Activated B cell treated with CpG ODN at 0.5 μM for 24 hours (primary cell): ENCODE measurements at regions of chr2 and their contacts with region 1.

Region 1: DNA sequence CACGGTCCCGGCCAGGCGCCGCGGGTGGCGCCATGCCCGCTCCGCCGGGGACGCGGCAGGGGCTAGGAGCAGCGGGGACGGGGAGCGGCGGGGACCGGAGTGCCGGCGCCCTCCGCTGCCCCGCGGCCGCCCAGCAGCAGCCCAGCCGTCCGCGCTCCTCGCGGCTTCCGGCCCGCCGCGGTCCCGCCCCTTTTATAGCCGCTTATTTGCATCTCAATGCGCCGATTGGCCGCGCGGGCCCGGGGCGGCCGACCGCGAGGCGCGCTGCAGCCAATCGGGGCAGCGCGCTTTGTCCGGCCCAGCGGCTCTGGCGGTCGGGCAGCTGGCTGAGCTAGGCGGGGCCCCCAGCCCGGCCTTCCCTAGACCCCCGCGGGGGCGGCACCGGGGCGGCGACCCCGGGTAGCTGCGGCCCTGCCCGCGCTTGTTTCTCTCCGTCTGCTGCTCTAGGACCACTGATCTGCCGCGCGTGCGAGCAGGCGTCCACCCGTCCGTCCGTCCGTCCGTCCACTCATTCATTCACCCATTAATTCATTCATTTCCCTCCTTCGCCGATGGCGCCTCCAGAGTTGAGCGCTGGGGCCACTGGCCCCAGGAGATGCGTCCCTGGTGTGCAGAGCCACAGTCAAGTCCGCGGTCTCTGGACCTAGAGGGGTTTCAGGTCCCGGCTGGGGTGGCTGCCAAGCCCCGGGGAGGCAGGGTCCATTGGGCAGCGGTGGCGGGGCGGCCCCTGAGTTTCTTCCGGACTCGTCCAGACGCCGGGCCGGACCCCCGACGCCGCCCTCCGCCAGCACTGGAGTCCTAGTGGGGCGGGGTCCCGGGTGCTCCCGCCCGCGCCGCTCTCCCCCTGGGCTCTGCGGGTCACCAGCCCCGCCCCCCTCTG is at the start of gene HES6:
- DNase-seq: peak; percentile 77
- ATAC-seq: peak; percentile 86
- H3K4me3 Mint-ChIP-seq: peak within 1 kb of the TSS; percentile 86
- H3K27ac Mint-ChIP-seq: peak within 1 kb of the TSS; percentile 68
- H3K4me1 Mint-ChIP-seq: peaks cover 13% of the 10 kb centered on the region
- H3K27me3 Mint-ChIP-seq: peaks cover 12% of the 10 kb centered on the region
- CTCF ChIP-seq: no peak
- total RNA-seq, gene HES6: 4.4 and 5.0 TPM in 2 replicates

Region 2: GRCh38 chr2:238106686-238107524 is 133.2 kb before region 1 on chr2:
- CTCF ChIA-PET with region 1: no interaction called
- POLR2A ChIA-PET with region 1: no interaction called
- intact Hi-C with region 1: loop called (anchors 10 kb)
- DNase-seq: peak; percentile 15
- ATAC-seq: no peak
- H3K4me3 Mint-ChIP-seq: peak overlapping the region; percentile 88
- H3K27ac Mint-ChIP-seq: peak overlapping the region; percentile 86
- H3K4me1 Mint-ChIP-seq: peaks cover 35% of the 10 kb centered on the region
- H3K27me3 Mint-ChIP-seq: no peaks in the 10 kb centered on the region
- CTCF ChIP-seq: no peak

Region 3: GRCh38 chr2:238220892-238221521 is 19.1 kb before region 1 on chr2:
- CTCF ChIA-PET with region 1: no interaction called
- POLR2A ChIA-PET with region 1: no interaction called
- intact Hi-C with region 1: no loop called
- DNase-seq: no peak
- ATAC-seq: no peak
- H3K4me3 Mint-ChIP-seq: peak overlapping the region; percentile 35
- H3K27ac Mint-ChIP-seq: no peak overlapping the region
- H3K4me1 Mint-ChIP-seq: no peaks in the 10 kb centered on the region
- H3K27me3 Mint-ChIP-seq: peaks cover 8% of the 10 kb centered on the region
- CTCF ChIP-seq: no peak

Region 4: DNA sequence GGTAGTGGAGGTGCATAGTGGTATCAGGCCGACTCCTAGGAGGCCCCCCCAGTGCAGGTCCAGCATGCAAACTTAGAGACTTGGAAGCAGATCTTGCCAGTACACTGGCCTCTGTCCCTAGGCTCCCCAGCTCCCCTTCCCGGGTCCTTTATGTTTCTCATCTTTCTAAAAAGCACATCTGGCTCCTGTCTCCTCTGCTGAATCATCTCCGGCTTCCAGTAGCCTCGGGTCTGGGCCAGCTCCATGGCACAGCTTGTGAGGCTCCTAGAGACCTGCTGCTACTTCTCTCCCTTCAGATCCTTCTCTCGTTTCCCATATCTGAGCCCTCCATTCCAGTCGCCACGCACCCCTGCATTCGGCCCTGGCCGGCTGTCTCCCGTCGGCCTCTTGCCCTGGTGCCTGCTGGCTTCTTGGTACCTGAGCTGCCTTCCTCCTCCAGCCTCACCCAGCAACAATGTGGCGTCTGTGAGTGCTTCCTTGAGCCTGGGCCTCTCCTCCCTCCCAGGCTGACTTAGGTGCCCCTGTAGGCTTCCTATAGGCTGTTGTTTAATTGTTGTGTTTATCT is 86.8 kb after region 1 on chr2:
- CTCF ChIA-PET with region 1: no interaction called
- POLR2A ChIA-PET with region 1: no interaction called
- intact Hi-C with region 1: no loop called
- DNase-seq: no peak
- ATAC-seq: no peak
- H3K4me3 Mint-ChIP-seq: no peak overlapping the region
- H3K27ac Mint-ChIP-seq: no peak overlapping the region
- H3K4me1 Mint-ChIP-seq: no peaks in the 10 kb centered on the region
- H3K27me3 Mint-ChIP-seq: no peaks in the 10 kb centered on the region
- CTCF ChIP-seq: no peak

Region 5: GRCh38 chr2:239169311-239170048 is 929.4 kb after region 1 on chr2:
- CTCF ChIA-PET with region 1: no interaction called
- POLR2A ChIA-PET with region 1: no interaction called
- intact Hi-C with region 1: no loop called
- DNase-seq: no peak
- ATAC-seq: no peak
- H3K4me3 Mint-ChIP-seq: no peak overlapping the region
- H3K27ac Mint-ChIP-seq: no peak overlapping the region
- H3K4me1 Mint-ChIP-seq: no peaks in the 10 kb centered on the region
- H3K27me3 Mint-ChIP-seq: no peaks in the 10 kb centered on the region
- CTCF ChIP-seq: no peak